ENCODE measurements at regions of chr7 and their contacts with region 1.

Region 1: GRCh38 chr7:151028131-151028947 is at the start of gene ABCB8:
- DNase-seq: peak; percentile 95 to 100 (median 97)
- ATAC-seq: peak; percentile 90
- H3K4me3 ChIP-seq: peak within 1 kb of the TSS; percentile 74
- H3K4me3 Mint-ChIP-seq: peak within 1 kb of the TSS; percentile 96
- H3K27ac ChIP-seq: peak within 1 kb of the TSS; percentile 80 to 96
- H3K27ac Mint-ChIP-seq: peak within 1 kb of the TSS; percentile 98
- H3K4me1 ChIP-seq: peaks cover 22% of the 10 kb centered on the region
- H3K4me1 Mint-ChIP-seq: peaks cover 41% of the 10 kb centered on the region
- H3K27me3 ChIP-seq: no peaks in the 10 kb centered on the region
- H3K27me3 Mint-ChIP-seq: no peaks in the 10 kb centered on the region
- CTCF ChIP-seq: peak; percentile 63
- total RNA-seq, gene ABCB8: 57.0 to 62.2 TPM

Region 2: GRCh38 chr7:150974468-150975391 is 53.6 kb before region 1 on chr7:
- CTCF ChIA-PET with region 1: no interaction called
- POLR2A ChIA-PET with region 1: interaction called, 11 read pairs
- intact Hi-C with region 1: no loop called
- DNase-seq: peak; percentile 76 to 93 (median 84)
- ATAC-seq: peak; percentile 69
- H3K4me3 ChIP-seq: peak overlapping the region; percentile 65
- H3K4me3 Mint-ChIP-seq: peak overlapping the region; percentile 90
- H3K27ac ChIP-seq: peak overlapping the region; percentile 62 to 63
- H3K27ac Mint-ChIP-seq: peak overlapping the region; percentile 91
- H3K4me1 ChIP-seq: peaks cover 64% of the 10 kb centered on the region
- H3K4me1 Mint-ChIP-seq: peaks cover 60% of the 10 kb centered on the region
- H3K27me3 ChIP-seq: peaks cover 24 to 30% of the 10 kb centered on the region in 2 experiments
- H3K27me3 Mint-ChIP-seq: peaks cover 25% of the 10 kb centered on the region
- CTCF ChIP-seq: peak; percentile 24

Region 3: DNA sequence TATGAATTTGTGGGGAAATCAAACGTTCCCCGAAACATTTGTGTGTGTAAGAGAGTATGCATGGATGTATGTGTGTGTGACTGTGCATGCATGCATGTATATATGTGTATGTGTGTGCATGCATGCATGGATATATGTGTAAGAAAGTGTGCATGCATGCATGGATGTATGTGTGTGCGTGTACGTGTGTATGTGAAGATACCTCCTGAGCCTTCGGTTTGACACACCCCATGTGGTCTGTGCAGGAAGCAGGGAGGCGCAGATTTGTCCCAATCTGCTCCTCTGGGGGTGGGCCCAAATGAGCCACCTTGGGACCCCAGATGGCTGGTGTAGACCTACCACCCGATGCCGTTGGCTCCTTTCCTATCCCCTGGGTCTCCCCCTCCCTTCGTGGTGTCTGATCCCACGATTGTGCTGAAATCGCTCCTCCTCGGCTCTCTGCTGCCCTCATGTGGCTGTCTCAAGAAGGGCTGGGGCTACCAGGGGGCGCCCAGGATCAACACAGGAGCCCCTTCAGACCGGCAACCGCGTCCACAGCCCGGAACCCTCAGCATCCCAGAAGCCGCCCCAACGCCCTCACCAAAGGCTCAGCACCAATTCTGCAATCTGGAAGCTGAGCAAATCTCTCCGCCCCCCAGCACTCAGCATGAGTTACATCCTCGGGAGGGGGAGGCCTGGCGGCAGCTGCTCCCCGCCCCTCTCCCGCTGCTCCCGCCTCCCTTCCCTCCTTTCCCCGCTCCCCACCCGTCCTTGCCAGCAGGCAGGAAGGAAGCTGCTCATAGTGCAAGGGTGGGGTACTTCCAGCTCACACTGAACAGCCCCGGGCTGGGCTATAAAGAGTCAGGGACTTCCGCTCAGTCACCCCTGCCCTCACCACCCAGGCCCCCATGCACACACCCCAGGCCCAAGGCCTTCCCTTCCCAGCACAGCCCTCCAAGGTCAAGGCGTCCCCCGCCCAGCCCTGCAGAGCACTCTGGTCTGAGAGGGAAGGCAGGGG is 39.8 kb before region 1 on chr7:
- CTCF ChIA-PET with region 1: no interaction called
- POLR2A ChIA-PET with region 1: interaction called, 4 read pairs
- intact Hi-C with region 1: loop called in 1 of 2 experiments (anchors 1 kb)
- DNase-seq: peak; percentile 46 to 83 (median 64)
- ATAC-seq: peak; percentile 76
- H3K4me3 ChIP-seq: peak overlapping the region; percentile 28
- H3K4me3 Mint-ChIP-seq: peak overlapping the region; percentile 63
- H3K27ac ChIP-seq: peak overlapping the region in 1 of 2 donors; percentile 33
- H3K27ac Mint-ChIP-seq: no peak overlapping the region
- H3K4me1 ChIP-seq: peaks cover 42% of the 10 kb centered on the region
- H3K4me1 Mint-ChIP-seq: peaks cover 38% of the 10 kb centered on the region
- H3K27me3 ChIP-seq: no peaks in the 10 kb centered on the region
- H3K27me3 Mint-ChIP-seq: peaks cover 4% of the 10 kb centered on the region
- CTCF ChIP-seq: peak; percentile 90

Region 4: DNA sequence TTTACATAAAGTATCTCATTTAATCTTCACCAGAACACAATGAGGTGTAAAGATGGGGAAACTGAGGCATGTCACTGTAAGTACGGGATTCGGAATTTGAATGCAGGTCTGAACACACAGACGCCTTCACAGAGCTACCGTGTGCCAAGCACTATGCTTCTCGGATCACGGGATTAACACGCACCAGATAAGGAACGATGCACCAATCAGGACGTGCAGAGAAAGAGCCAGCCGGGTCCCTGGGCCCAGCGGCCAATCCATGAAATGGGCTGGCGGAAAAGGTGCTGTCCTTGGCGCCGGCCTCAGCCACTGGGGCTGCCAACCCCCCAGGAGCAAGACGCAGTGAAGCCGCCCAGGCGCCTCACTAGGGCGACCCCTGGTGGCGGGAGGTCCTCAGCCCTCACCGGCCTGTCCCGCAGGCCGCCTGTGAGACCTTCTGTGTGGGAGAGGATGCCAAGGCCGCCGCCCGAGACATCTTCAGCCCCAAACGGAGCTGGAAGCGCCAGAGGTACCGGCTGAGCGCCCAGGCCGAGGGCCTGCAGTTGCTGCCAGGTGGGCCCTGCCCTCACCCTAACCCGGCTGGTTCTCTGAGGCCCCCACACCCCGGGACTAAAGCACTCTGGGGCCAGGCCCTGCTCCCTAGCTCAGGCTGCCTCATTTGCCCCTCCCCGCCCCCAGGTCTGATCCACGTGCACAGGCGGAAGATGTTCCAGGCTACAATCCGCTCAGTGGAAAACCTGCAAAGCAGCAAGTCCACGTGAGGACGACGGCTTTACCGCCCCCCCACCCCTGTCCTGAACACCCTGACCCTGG is 19.6 kb before region 1 on chr7:
- CTCF ChIA-PET with region 1: interaction called, 10 read pairs
- POLR2A ChIA-PET with region 1: interaction called, 77 read pairs
- intact Hi-C with region 1: no loop called
- DNase-seq: peak; percentile 53 to 88 (median 74)
- ATAC-seq: peak; percentile 18
- H3K4me3 ChIP-seq: peak overlapping the region; percentile 52
- H3K4me3 Mint-ChIP-seq: peak overlapping the region; percentile 87
- H3K27ac ChIP-seq: peak overlapping the region; percentile 74 to 79
- H3K27ac Mint-ChIP-seq: peak overlapping the region; percentile 88
- H3K4me1 ChIP-seq: peaks cover 75% of the 10 kb centered on the region
- H3K4me1 Mint-ChIP-seq: peaks cover 71% of the 10 kb centered on the region
- H3K27me3 ChIP-seq: no peaks in the 10 kb centered on the region
- H3K27me3 Mint-ChIP-seq: no peaks in the 10 kb centered on the region
- CTCF ChIP-seq: peak; percentile 67

Region 5: GRCh38 chr7:151057989-151058780 is 29.8 kb after region 1 on chr7:
- CTCF ChIA-PET with region 1: interaction called, 8 read pairs
- POLR2A ChIA-PET with region 1: interaction called, 17 read pairs
- intact Hi-C with region 1: loop called (anchors 1 to 2 kb)
- DNase-seq: peak; percentile 92 to 100 (median 96)
- ATAC-seq: peak; percentile 94
- H3K4me3 ChIP-seq: peak overlapping the region; percentile 89
- H3K4me3 Mint-ChIP-seq: peak overlapping the region; percentile 96
- H3K27ac ChIP-seq: peak overlapping the region; percentile 69 to 71
- H3K27ac Mint-ChIP-seq: peak overlapping the region; percentile 91
- H3K4me1 ChIP-seq: peaks cover 49% of the 10 kb centered on the region
- H3K4me1 Mint-ChIP-seq: peaks cover 42% of the 10 kb centered on the region
- H3K27me3 ChIP-seq: no peaks in the 10 kb centered on the region
- H3K27me3 Mint-ChIP-seq: no peaks in the 10 kb centered on the region
- CTCF ChIP-seq: no peak

Region 6: DNA sequence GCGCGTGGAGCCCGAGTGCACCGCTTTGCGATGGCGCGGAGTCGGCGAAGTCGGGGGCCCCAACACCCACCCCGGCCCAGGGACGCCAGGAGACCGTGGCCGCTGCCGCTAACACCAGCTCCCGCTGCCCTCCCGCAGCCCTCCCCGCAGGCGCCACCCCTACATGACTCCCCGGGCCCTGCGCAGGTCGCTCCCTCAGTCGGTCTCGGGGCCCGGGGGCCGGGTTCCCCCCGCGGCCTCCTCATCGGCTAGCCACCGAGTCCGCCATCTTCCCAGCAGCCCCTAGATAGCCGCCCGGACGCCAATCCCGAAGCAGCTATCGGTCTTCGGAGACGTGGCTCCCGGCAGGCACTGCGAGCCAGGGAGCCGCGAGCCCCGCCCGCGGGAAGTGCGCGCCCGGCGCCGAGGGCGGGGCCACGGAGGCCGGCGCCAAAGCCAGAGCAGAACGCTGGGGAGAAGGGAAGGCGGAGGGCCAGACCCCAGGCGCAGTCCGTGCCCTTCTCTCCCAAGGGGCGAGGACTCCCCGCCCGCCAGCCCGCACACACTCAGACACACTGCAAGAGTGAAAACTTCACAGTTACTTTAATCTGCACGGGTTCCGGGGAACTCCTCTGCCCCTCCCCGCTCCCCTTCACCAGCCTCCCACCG is 52.3 kb after region 1 on chr7 and contains the start of gene FASTK:
- CTCF ChIA-PET with region 1: interaction called, 8 read pairs
- POLR2A ChIA-PET with region 1: interaction called, 8 read pairs
- intact Hi-C with region 1: loop called (anchors 1 kb)
- DNase-seq: peak; percentile 73 to 95 (median 85)
- ATAC-seq: peak; percentile 63
- H3K4me3 ChIP-seq: peak within 1 kb of the TSS; percentile 98
- H3K4me3 Mint-ChIP-seq: peak within 1 kb of the TSS; percentile 92
- H3K27ac ChIP-seq: peak within 1 kb of the TSS; percentile 77 to 92
- H3K27ac Mint-ChIP-seq: peak within 1 kb of the TSS; percentile 85
- H3K4me1 ChIP-seq: peaks cover 52% of the 10 kb centered on the region
- H3K4me1 Mint-ChIP-seq: peaks cover 45% of the 10 kb centered on the region
- H3K27me3 ChIP-seq: no peaks in the 10 kb centered on the region
- H3K27me3 Mint-ChIP-seq: peaks cover 4% of the 10 kb centered on the region
- CTCF ChIP-seq: no peak
- total RNA-seq, gene FASTK: 82.2 to 84.2 TPM

Region 7: DNA sequence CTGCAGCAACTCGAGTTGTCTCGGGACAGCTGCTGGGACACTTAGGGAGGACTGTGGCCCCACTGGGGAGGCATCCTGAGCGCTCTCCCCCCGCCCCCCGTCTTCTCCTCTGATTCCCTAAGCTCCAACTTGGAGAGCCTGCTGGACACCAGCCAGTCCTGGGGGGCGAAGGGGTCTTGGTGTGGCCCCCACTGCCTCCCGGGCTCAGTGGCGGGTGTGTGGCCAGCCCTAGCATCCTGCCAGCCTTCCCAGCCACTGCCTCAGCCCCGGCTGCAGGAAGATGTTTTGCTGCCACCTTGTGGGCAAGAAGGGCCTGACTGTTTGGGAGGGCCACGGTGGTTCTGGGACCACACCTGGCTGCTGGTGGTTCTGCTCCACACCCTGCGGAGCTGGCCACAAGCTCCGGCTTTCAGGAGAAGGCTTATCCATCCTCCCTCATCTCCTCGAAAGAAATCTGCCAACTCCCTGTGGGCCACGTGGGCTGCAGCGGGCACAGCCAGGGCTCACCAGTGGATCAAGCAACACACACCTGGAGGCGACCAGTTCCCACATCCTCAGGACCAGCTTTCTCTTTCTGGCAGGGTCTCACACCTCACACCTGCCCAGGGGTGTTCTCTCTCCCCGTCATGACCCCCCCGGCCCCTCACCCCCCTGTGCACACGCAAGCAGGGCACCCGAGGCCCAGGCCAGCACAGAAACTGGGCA is 82.8 kb after region 1 on chr7:
- CTCF ChIA-PET with region 1: interaction called, 7 read pairs
- POLR2A ChIA-PET with region 1: interaction called, 5 read pairs
- intact Hi-C with region 1: loop called in 1 of 2 experiments (anchors 1 kb)
- DNase-seq: peak; percentile 60 to 85 (median 72)
- ATAC-seq: peak; percentile 75
- H3K4me3 ChIP-seq: no peak overlapping the region
- H3K4me3 Mint-ChIP-seq: no peak overlapping the region
- H3K27ac ChIP-seq: no peak overlapping the region
- H3K27ac Mint-ChIP-seq: no peak overlapping the region
- H3K4me1 ChIP-seq: peaks cover 20% of the 10 kb centered on the region
- H3K4me1 Mint-ChIP-seq: peaks cover 9% of the 10 kb centered on the region
- H3K27me3 ChIP-seq: peaks cover 5 to 10% of the 10 kb centered on the region in 2 experiments
- H3K27me3 Mint-ChIP-seq: peaks cover 22% of the 10 kb centered on the region
- CTCF ChIP-seq: peak; percentile 80

Region 8: GRCh38 chr7:151711906-151712809 is 683.8 kb after region 1 on chr7:
- CTCF ChIA-PET with region 1: no interaction called
- POLR2A ChIA-PET with region 1: no interaction called
- intact Hi-C with region 1: no loop called
- DNase-seq: no peak
- ATAC-seq: no peak
- H3K4me3 ChIP-seq: no peak overlapping the region
- H3K4me3 Mint-ChIP-seq: no peak overlapping the region
- H3K27ac ChIP-seq: no peak overlapping the region
- H3K27ac Mint-ChIP-seq: no peak overlapping the region
- H3K4me1 ChIP-seq: no peaks in the 10 kb centered on the region
- H3K4me1 Mint-ChIP-seq: peaks cover 5% of the 10 kb centered on the region
- H3K27me3 ChIP-seq: no peaks in the 10 kb centered on the region
- H3K27me3 Mint-ChIP-seq: no peaks in the 10 kb centered on the region
- CTCF ChIP-seq: no peak